ENCODE measurements at regions of chr11 and their contacts with region 1.

Region 1: GRCh38 chr11:111797145-111797581 is 31.0 kb upstream of the PPP2R1B start:
- DNase-seq: no peak
- H3K4me3 ChIP-seq: no peak overlapping the region
- H3K4me3 Mint-ChIP-seq: no peak overlapping the region
- H3K27ac Mint-ChIP-seq: no peak overlapping the region
- H3K4me1 ChIP-seq: peaks cover 20% of the 10 kb centered on the region
- H3K4me1 Mint-ChIP-seq: peaks cover 21% of the 10 kb centered on the region
- H3K27me3 ChIP-seq: no peaks in the 10 kb centered on the region
- H3K27me3 Mint-ChIP-seq: no peaks in the 10 kb centered on the region
- CTCF ChIP-seq: no peak

Region 2: DNA sequence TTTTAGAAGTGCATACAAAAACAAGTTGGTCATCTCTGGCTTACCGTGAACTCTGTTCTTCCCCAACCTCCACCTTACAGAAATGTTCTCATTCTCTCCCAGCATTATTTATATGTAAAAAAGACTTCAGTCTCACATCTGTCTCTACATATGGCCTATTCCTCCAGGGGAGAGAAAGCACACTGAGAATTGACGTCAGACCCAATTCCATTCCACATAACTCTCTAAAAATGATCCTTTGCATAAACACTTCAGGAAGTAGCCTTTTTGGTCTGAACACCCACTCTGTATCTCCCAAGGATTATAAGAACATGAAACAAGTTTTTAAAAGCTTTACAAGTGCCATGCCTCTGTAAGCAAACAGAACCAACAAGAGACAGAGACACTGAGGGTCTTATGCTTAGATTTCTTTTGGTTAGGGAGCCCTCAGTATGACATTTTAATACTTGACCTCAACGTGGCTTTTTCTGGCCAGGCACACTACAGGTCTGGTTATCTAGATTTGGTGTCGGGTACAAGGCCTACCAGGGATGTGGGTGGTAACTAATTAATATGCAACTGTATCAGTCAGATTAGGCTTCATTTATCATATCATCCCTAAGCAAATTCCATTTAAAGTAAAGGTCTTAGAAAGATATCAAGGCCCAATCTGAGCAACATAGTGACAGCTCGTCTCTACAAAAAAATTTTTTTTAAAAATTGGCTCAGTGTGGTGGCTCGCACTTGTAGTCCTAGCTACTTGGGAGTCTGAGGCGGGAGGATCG is 17.6 kb after region 1 on chr11:
- CTCF ChIA-PET with region 1: no interaction called
- POLR2A ChIA-PET with region 1: no interaction called
- intact Hi-C with region 1: loop called (anchors 1 kb)
- DNase-seq: no peak
- H3K4me3 ChIP-seq: no peak overlapping the region
- H3K4me3 Mint-ChIP-seq: no peak overlapping the region
- H3K27ac Mint-ChIP-seq: no peak overlapping the region
- H3K4me1 ChIP-seq: peaks cover 4% of the 10 kb centered on the region; the same call in 1 of the 2 replicates
- H3K4me1 Mint-ChIP-seq: peaks cover 8% of the 10 kb centered on the region
- H3K27me3 ChIP-seq: no peaks in the 10 kb centered on the region
- H3K27me3 Mint-ChIP-seq: no peaks in the 10 kb centered on the region
- CTCF ChIP-seq: no peak

Region 3: GRCh38 chr11:111833524-111833923 is 36.4 kb after region 1 on chr11:
- CTCF ChIA-PET with region 1: interaction called, 3 read pairs
- POLR2A ChIA-PET with region 1: interaction called, 4 read pairs
- intact Hi-C with region 1: loop called (anchors 2 kb)
- DNase-seq: peak in 1 of 2 experiments; percentile 25
- H3K4me3 ChIP-seq: no peak overlapping the region
- H3K4me3 Mint-ChIP-seq: no peak overlapping the region
- H3K27ac Mint-ChIP-seq: no peak overlapping the region
- H3K4me1 ChIP-seq: peaks cover 9% of the 10 kb centered on the region; the same call in 1 of the 2 replicates
- H3K4me1 Mint-ChIP-seq: peaks cover 11% of the 10 kb centered on the region
- H3K27me3 ChIP-seq: no peaks in the 10 kb centered on the region
- H3K27me3 Mint-ChIP-seq: no peaks in the 10 kb centered on the region
- CTCF ChIP-seq: peak; percentile 24 to 42

Measured in Caco-2 (cell line).